Ovary (tissue), 10 donors: ENCODE measurements at regions of chr21 and their contacts with region 1.

Region 1: DNA sequence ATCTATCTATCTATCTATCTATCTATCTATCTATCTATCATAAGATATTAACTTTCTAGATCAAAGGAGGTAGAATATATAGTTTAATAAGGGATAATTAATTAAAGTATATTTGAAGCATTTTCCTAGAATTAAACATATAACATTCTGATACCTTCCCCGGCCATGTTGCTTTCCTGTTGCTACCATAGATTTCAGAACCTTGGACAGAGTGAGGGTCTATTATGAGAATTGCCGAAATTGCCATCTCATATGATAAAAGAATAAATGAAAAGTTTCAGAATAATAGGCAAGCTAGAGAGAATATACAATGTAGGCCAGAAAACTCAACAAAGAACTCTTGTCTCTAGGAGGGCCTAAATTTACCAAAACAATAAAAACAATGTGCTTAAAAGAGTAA is 706.1 kb upstream of the TMPRSS15 start:
- DNase-seq: no peak
- H3K4me3 ChIP-seq: no peak overlapping the region
- H3K27ac ChIP-seq: no peak overlapping the region
- H3K4me1 ChIP-seq: no peaks in the 10 kb centered on the region
- H3K27me3 ChIP-seq: no peaks in the 10 kb centered on the region
- CTCF ChIP-seq: no peak
- EP300 ChIP-seq: no peak
- POLR2A ChIP-seq: no peak

Region 2: GRCh38 chr21:19048098-19048672 is 61.5 kb before region 1 on chr21:
- intact Hi-C with region 1: loop called in 1 of 4 experiments (anchors 10 kb)
- DNase-seq: no peak
- H3K4me3 ChIP-seq: no peak overlapping the region
- H3K27ac ChIP-seq: no peak overlapping the region
- H3K4me1 ChIP-seq: no peaks in the 10 kb centered on the region
- H3K27me3 ChIP-seq: peaks cover 4% of the 10 kb centered on the region
- CTCF ChIP-seq: no peak
- EP300 ChIP-seq: no peak
- POLR2A ChIP-seq: no peak

Region 3: DNA sequence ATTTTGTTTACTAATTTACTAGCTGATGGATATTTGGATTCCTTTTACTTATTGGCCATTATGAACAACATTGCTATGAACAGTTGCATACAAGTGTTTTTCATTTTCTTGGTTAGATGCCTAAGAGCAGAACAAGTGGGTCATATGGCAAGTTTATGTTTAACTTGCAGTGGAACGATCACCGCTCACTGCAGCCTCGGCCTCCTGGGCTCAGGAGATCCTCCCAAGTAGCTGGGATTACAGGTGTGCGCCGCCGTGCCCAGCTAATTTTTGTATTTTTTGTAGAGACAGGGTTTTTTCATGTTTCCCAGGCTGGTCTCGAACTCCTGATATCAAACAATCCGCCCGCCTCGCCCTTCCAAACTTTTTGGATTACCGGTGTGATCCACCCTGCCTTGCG is 114.4 kb after region 1 on chr21:
- intact Hi-C with region 1: no loop called
- DNase-seq: no peak
- H3K4me3 ChIP-seq: no peak overlapping the region
- H3K27ac ChIP-seq: no peak overlapping the region
- H3K4me1 ChIP-seq: no peaks in the 10 kb centered on the region
- H3K27me3 ChIP-seq: no peaks in the 10 kb centered on the region
- CTCF ChIP-seq: no peak
- EP300 ChIP-seq: no peak
- POLR2A ChIP-seq: no peak